Vagina (tissue), 2 donors: ENCODE measurements at regions of chr3 and their contacts with region 1.

Region 1: DNA sequence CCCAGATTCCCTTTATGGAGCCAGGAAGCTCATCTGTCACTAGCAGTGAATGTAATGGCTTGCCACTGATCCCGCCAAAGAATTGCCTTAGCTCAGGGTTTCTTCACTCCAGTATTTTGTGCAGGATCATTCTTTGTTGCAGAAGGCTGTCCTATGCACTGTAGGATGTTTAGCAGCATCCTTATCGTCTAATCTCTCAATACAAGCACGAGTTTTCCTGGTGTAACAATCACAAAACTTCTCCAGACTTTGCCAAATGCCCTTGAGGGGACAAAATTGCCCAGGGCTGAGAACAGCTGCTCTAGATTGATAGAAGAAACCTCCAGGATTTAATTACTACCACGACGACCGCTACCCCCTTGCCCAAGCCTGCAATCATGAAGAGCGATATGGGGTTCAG is 6.8 kb upstream of the SHQ1 start:
- DNase-seq: no peak
- H3K4me3 ChIP-seq: no peak overlapping the region
- H3K27ac ChIP-seq: no peak overlapping the region
- H3K4me1 ChIP-seq: no peaks in the 10 kb centered on the region
- H3K27me3 ChIP-seq: no peaks in the 10 kb centered on the region
- CTCF ChIP-seq: no peak
- POLR2A ChIP-seq: no peak

Region 2: DNA sequence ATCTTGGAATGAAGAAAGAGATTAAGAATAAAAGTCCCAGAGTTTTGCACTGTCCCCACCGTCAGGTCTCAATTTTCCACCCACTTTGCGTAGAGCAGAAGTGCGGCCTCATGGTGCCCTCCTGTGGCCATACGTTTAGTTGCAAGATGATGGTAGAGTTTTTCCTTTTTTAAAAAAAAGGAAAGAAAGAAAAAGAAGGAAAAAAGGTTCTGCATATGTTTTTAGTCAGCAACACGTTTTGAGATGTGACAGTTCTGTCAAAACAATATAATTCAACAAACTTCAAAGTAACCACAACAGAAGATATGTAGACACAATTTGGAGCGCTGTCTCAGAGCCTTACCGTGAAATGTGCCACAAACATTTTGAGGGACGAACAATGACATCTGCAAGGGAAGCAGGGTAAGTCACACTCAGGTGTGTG is 231.1 kb after region 1 on chr3:
- intact Hi-C with region 1: loop called (anchors 10 kb)
- DNase-seq: no peak
- H3K4me3 ChIP-seq: no peak overlapping the region
- H3K27ac ChIP-seq: no peak overlapping the region
- H3K4me1 ChIP-seq: peaks cover 5% of the 10 kb centered on the region
- H3K27me3 ChIP-seq: no peaks in the 10 kb centered on the region
- CTCF ChIP-seq: peak; percentile 51 to 83 (median 63)
- POLR2A ChIP-seq: no peak